ENCODE measurements at regions of chr10 and their contacts with region 1.

Region 1: GRCh38 chr10:102001435-102002068 is 54.4 kb downstream of the ARMH3 start:
- DNase-seq: peak; percentile 84
- ATAC-seq: peak; percentile 85
- H3K4me3 ChIP-seq: peak overlapping the region in 4 of 5 experiments; percentile 2 to 42 (median 38)
- H3K4me3 Mint-ChIP-seq: peak overlapping the region; percentile 85
- H3K27ac ChIP-seq: peak overlapping the region; percentile 76 to 90
- H3K27ac Mint-ChIP-seq: peak overlapping the region; percentile 93
- H3K4me1 ChIP-seq: peaks cover 85 to 86% of the 10 kb centered on the region in 2 donors
- H3K4me1 Mint-ChIP-seq: peaks cover 66% of the 10 kb centered on the region
- H3K27me3 ChIP-seq: no peaks in the 10 kb centered on the region
- H3K27me3 Mint-ChIP-seq: no peaks in the 10 kb centered on the region
- CTCF ChIP-seq: no peak

Region 2: DNA sequence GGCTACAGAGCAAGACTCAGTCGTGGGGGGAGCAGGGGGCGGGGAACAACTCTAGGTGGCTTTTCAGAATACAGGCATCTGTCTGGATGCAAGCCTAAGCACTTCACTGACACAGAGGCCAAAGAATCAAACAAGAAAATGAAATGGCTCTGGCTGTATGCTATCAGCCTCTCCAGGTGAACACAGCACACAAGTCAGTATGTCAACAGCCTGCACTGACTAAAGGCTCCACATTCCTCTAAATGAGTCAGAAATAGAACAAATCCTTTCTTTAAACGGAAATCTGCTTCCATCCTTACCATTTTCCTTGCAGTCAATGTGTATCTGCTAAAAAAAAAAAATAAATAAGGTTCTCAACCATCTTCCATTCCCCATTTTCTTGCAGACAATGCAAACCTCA is 33.8 kb before region 1 on chr10:
- CTCF ChIA-PET with region 1: interaction called, 11 read pairs
- POLR2A ChIA-PET with region 1: interaction called, 3 read pairs
- intact Hi-C with region 1: loop called (anchors 2 kb)
- DNase-seq: no peak
- ATAC-seq: no peak
- H3K4me3 ChIP-seq: peak overlapping the region in 1 of 5 experiments; percentile 11
- H3K4me3 Mint-ChIP-seq: peak overlapping the region; percentile 24
- H3K27ac ChIP-seq: peak overlapping the region; percentile 93 to 97
- H3K27ac Mint-ChIP-seq: peak overlapping the region; percentile 92
- H3K4me1 ChIP-seq: peaks cover 81 to 82% of the 10 kb centered on the region in 2 donors
- H3K4me1 Mint-ChIP-seq: peaks cover 80% of the 10 kb centered on the region
- H3K27me3 ChIP-seq: no peaks in the 10 kb centered on the region
- H3K27me3 Mint-ChIP-seq: no peaks in the 10 kb centered on the region
- CTCF ChIP-seq: no peak

Region 3: DNA sequence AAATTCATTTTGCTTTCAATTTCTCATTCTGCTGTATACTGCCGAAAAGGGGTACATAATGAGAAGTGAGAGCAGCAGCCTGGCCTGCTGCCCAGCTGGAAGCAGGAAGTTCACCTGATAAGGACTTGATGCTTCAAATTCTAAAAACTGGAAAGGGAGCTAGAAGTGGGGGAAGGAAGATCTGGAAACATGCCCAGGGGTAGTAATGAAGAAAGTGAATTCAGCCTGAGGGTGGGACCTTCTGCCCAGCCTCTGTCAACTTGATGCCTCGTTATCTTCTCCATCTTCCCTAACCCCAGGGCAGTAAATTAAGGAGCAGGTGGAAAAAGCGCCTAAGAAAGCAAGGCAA is 15.0 kb before region 1 on chr10:
- CTCF ChIA-PET with region 1: interaction called, 32 read pairs
- POLR2A ChIA-PET with region 1: interaction called, 4 read pairs
- intact Hi-C with region 1: loop called (anchors 2 kb)
- DNase-seq: peak; percentile 71
- ATAC-seq: peak; percentile 85
- H3K4me3 ChIP-seq: peak overlapping the region in 3 of 5 experiments; percentile 11 to 39 (median 30)
- H3K4me3 Mint-ChIP-seq: peak overlapping the region; percentile 77
- H3K27ac ChIP-seq: peak overlapping the region; percentile 86 to 87
- H3K27ac Mint-ChIP-seq: peak overlapping the region; percentile 86
- H3K4me1 ChIP-seq: peaks cover 25 to 28% of the 10 kb centered on the region in 2 donors
- H3K4me1 Mint-ChIP-seq: peaks cover 23% of the 10 kb centered on the region
- H3K27me3 ChIP-seq: no peaks in the 10 kb centered on the region
- H3K27me3 Mint-ChIP-seq: no peaks in the 10 kb centered on the region
- CTCF ChIP-seq: no peak

Measured in B cell (primary cell).